Adrenal gland (tissue), 19 donors: ENCODE measurements at regions of chr5 and their contacts with region 1.

Region 1: GRCh38 chr5:127492854-127493738 is 24.3 kb upstream of the PRRC1 start:
- DNase-seq: no peak
- H3K4me3 ChIP-seq: no peak overlapping the region
- H3K27ac ChIP-seq: no peak overlapping the region
- H3K4me1 ChIP-seq: no peaks in the 10 kb centered on the region
- H3K27me3 ChIP-seq: no peaks in the 10 kb centered on the region
- CTCF ChIP-seq: peak; percentile 59 to 85 (median 72)
- POLR2A ChIP-seq: no peak

Region 2: DNA sequence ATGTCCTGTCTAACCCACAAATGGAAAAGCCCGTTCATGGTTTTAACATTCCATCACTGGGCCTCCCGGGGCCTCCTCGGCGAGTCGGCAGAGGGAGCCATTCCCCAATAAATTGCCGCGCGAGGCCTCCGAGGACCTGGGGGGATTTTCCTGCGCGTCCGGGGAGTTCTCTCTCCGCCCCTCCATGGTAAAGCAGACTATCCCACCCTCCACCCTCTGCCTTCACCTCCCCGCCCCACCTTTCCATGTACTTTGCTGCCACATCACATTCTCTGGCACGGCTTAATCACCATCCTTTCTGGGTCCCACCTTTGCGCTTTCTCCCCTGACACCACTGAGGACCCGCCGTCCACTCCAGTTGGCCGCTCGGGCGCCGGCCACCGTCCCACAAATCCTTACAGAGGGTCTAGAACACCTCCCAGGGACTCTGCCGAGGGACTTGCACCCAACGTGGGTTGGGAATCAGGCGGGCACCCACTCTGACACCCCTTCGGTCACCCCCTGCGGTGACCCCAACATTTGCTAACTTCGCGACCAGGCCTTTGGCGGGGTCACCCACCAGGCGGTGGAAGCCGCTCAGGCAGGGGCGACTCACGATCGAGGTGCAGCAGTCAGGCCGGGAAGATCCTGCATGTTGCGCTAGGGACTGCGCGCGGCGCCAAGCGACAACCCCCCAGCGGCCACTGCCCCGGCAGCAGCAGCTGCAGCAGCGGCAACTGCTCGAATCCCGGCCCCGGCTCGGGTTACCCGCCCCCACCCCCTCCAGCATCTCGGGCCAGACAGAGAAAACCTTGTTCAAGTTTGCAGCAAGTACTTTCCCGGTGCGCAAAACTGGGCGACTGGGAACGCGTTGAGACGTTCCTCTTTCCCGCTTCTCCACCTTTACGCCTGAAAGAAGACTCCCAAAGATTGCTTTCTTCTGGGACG is 202.8 kb before region 1 on chr5 and contains the start of gene MEGF10:
- intact Hi-C with region 1: loop called in 1 of 2 experiments (anchors 5 kb)
- DNase-seq: peak; percentile 42 to 59 (median 53)
- H3K4me3 ChIP-seq: peak within 1 kb of the TSS in 2 of 4 donors; percentile 6 to 41
- H3K27ac ChIP-seq: peak within 1 kb of the TSS in 2 of 5 donors; percentile 28 to 35
- H3K4me1 ChIP-seq: no peaks in the 10 kb centered on the region
- H3K27me3 ChIP-seq: peaks cover 7% of the 10 kb centered on the region
- CTCF ChIP-seq: peak; percentile 38 to 63 (median 61)
- POLR2A ChIP-seq: no peak
- total RNA-seq, gene MEGF10: 1.1 to 45.1 (median 12.1) TPM

Region 3: GRCh38 chr5:127451096-127451495 is 42.0 kb before region 1 on chr5:
- intact Hi-C with region 1: no loop called
- DNase-seq: no peak
- H3K4me3 ChIP-seq: no peak overlapping the region
- H3K27ac ChIP-seq: no peak overlapping the region
- H3K4me1 ChIP-seq: no peaks in the 10 kb centered on the region
- H3K27me3 ChIP-seq: no peaks in the 10 kb centered on the region
- CTCF ChIP-seq: no peak
- POLR2A ChIP-seq: no peak